RWPE1 (cell line): ENCODE measurements at regions of chr6 and their contacts with region 1.

Region 1: DNA sequence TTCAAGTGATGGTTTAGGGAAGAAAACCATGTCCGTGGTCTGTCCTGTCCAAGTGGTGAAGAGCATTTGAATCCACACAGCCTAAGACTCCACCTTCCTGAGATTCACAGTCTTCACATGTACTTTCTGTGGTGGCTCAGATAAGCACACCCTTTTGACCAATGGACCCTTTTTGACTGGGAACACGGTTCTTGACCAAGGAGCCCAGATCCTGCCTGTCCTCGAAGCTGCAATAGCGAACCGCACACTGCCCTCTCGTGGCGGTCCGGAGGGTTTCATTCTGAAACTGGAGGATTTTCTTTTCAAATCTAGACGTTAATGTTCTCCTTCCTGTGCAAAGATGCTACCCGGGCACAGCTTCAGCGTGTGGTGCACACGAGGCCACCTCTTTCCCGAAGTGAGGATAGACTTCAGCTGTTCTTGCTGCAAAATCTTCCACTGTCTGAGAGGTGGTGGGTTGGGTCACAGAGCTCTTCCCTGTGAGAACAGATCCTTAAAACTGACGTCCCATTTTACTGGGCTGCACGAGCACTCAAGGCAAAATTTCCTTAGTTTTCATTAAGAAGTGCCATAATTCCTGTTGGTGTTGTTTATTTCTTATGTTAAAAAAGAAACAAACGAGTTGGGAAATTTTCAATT is 90.5 kb downstream of the SYNJ2 start:
- DNase-seq: peak; percentile 70
- H3K27ac ChIP-seq: no peak overlapping the region
- CTCF ChIP-seq: peak; percentile 83

Region 2: GRCh38 chr6:157800420-157801237 is 271.6 kb before region 1 on chr6:
- CTCF ChIA-PET with region 1: no interaction called
- POLR2A ChIA-PET with region 1: no interaction called
- DNase-seq: peak; percentile 52
- H3K27ac ChIP-seq: no peak overlapping the region
- CTCF ChIP-seq: no peak

Region 3: GRCh38 chr6:157981395-157982296 is 90.6 kb before region 1 on chr6 and contains the start of gene SYNJ2:
- CTCF ChIA-PET with region 1: interaction called, 10 read pairs
- POLR2A ChIA-PET with region 1: no interaction called
- DNase-seq: peak; percentile 89
- H3K27ac ChIP-seq: peak within 1 kb of the TSS; percentile 58
- CTCF ChIP-seq: peak; percentile 76